ENCODE measurements at regions of chr3 and their contacts with region 1.

Region 1: DNA sequence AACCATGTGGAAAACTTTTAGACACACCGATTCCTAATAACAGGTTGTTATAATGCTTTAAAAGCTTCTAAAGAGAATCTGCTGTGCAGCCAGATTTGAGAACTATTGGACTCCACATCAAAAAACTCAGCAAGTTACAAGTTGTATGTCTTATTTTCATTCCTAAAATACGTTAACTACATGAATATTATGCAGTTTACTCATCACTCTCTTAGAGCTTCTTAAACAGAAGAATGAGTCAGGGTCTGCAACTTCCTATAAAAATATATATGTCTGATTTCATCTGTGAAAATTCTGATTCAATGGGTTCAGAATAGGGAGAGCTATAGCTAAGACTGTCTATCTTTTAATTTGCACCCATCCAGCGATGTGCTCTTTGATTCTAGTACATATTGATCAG is 244.2 kb upstream of the EPHA3 start:
- DNase-seq: no peak
- ATAC-seq: no peak
- H3K4me3 ChIP-seq: no peak overlapping the region
- H3K27ac ChIP-seq: no peak overlapping the region
- H3K4me1 ChIP-seq: no peaks in the 10 kb centered on the region
- H3K27me3 ChIP-seq: no peaks in the 10 kb centered on the region
- CTCF ChIP-seq: no peak

Region 2: GRCh38 chr3:88690287-88690686 is 172.9 kb before region 1 on chr3:
- intact Hi-C with region 1: no loop called
- DNase-seq: no peak
- ATAC-seq: no peak
- H3K4me3 ChIP-seq: no peak overlapping the region
- H3K27ac ChIP-seq: no peak overlapping the region
- H3K4me1 ChIP-seq: no peaks in the 10 kb centered on the region
- H3K27me3 ChIP-seq: no peaks in the 10 kb centered on the region
- CTCF ChIP-seq: no peak

Region 3: GRCh38 chr3:88879905-88880304 is 16.7 kb after region 1 on chr3:
- intact Hi-C with region 1: loop called (anchors 2 kb)
- DNase-seq: no peak
- ATAC-seq: no peak
- H3K4me3 ChIP-seq: no peak overlapping the region
- H3K27ac ChIP-seq: no peak overlapping the region
- H3K4me1 ChIP-seq: no peaks in the 10 kb centered on the region
- H3K27me3 ChIP-seq: no peaks in the 10 kb centered on the region
- CTCF ChIP-seq: no peak